Activated naive CD4-positive, alpha-beta T cell treated with anti-CD3 and anti-CD28 coated beads for 36 hours (primary cell): ENCODE measurements at regions of chr17 and their contacts with region 1.

Region 1: GRCh38 chr17:47802341-47803022 is 19.1 kb downstream of the OSBPL7 start:
- DNase-seq: peak; percentile 73
- H3K4me3 Mint-ChIP-seq: no peak overlapping the region
- H3K27ac Mint-ChIP-seq: no peak overlapping the region
- H3K4me1 Mint-ChIP-seq: no peaks in the 10 kb centered on the region
- H3K27me3 Mint-ChIP-seq: no peaks in the 10 kb centered on the region

Region 2: DNA sequence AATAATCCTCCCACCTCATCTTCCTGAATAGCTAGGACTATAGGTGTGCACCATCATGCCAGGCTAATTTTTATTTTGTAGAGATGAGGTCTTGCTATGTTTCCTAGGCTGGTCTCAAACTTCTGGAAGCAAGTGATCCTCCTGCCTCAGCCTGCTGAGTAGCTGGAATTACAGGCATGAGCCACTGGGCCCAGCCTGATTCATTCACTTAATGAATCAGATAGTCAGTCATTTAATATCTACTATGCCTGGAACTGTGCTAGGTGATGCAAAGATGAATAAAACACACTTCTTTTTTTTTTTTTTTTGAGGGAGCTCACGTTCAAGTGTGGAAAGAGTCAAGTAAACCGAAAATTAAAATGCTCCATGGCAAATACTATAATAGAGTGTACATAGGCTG is 439.3 kb before region 1 on chr17:
- CTCF ChIA-PET with region 1: no interaction called
- intact Hi-C with region 1: loop called (anchors 5 kb)
- DNase-seq: no peak
- H3K4me3 Mint-ChIP-seq: no peak overlapping the region
- H3K27ac Mint-ChIP-seq: no peak overlapping the region
- H3K4me1 Mint-ChIP-seq: no peaks in the 10 kb centered on the region
- H3K27me3 Mint-ChIP-seq: no peaks in the 10 kb centered on the region

Region 3: GRCh38 chr17:47621293-47622178 is 180.9 kb before region 1 on chr17:
- CTCF ChIA-PET with region 1: no interaction called
- intact Hi-C with region 1: loop called (anchors 5 kb)
- DNase-seq: no peak
- H3K4me3 Mint-ChIP-seq: no peak overlapping the region
- H3K27ac Mint-ChIP-seq: peak overlapping the region; percentile 36
- H3K4me1 Mint-ChIP-seq: peaks cover 15% of the 10 kb centered on the region
- H3K27me3 Mint-ChIP-seq: no peaks in the 10 kb centered on the region

Region 4: DNA sequence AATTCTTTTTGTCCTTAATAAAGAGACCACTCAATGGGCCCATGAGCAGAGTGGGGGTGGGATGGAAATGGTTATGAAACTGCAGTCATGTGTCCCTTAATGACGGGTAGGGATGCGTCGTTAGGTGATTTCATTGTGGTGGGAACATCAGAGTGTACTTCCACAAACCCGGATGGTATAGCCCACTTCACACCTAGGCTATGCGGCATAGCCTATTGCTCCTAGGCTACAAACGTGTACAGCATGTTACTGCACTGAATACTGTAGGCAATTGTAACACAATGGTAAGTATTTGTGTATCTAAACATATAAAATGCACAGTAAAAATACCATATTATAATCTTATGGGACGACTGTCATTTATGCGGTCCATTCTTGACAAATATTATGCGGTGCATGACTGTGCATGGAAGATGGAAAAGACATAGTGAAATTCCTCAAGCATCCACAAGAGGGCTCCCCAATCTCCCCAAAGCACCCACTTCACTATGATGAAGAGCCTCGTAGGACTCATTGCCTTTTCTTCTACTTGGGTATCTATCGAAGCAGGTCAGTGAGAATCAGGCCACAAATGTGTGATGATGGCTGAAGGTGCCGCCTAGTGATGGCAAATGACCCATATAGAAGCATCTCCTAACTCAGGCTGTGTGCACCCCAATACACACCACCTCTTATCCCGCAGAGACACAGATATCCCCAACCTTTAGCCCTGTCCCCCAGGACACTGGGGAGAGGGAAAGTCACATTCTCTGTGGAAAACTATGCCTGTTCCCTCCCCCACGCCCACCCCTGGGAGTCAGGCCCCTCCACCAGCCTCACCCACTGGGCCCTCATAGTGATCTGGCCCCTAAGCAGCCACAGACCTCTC is 25.9 kb before region 1 on chr17:
- CTCF ChIA-PET with region 1: interaction called, 10 read pairs
- intact Hi-C with region 1: loop called (anchors 1 kb)
- DNase-seq: peak; percentile 52
- H3K4me3 Mint-ChIP-seq: no peak overlapping the region
- H3K27ac Mint-ChIP-seq: no peak overlapping the region
- H3K4me1 Mint-ChIP-seq: no peaks in the 10 kb centered on the region
- H3K27me3 Mint-ChIP-seq: peaks cover 26% of the 10 kb centered on the region